Breast epithelium (tissue), 4 donors: ENCODE measurements at regions of chr11 and their contacts with region 1.

Region 1: DNA sequence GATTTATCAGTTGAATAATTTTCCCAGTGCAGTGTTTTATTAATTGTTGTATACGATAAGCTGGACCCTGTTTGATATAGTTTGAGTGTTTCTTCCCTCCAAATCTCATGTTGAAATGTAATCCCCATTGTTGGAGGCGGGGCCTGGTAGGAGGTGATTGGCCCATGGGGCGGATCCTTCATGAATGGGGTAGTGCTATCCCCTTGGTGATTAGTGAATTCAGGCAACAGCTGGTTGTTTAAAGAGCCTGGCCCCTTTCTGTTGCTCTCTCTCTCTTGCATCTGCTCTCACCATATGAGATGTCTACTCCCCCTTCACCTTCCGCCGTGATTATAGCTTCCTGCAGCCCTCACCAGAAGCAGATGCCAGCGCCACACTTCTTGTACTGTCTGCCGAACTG is 1.5 kb downstream of the OR5A1 start:
- DNase-seq: no peak
- H3K4me3 ChIP-seq: no peak overlapping the region
- H3K27ac ChIP-seq: no peak overlapping the region
- H3K4me1 ChIP-seq: no peaks in the 10 kb centered on the region
- H3K27me3 ChIP-seq: no peaks in the 10 kb centered on the region
- CTCF ChIP-seq: no peak
- POLR2A ChIP-seq: no peak

Region 2: GRCh38 chr11:57485217-57485990 is 1952.4 kb before region 1 on chr11:
- intact Hi-C with region 1: loop called (anchors 5 kb)
- DNase-seq: no peak
- H3K4me3 ChIP-seq: no peak overlapping the region
- H3K27ac ChIP-seq: no peak overlapping the region
- H3K4me1 ChIP-seq: peaks cover 0 to 6% of the 10 kb centered on the region in 2 donors
- H3K27me3 ChIP-seq: peaks cover 0 to 2% of the 10 kb centered on the region in 2 donors
- CTCF ChIP-seq: no peak
- POLR2A ChIP-seq: no peak

Region 3: DNA sequence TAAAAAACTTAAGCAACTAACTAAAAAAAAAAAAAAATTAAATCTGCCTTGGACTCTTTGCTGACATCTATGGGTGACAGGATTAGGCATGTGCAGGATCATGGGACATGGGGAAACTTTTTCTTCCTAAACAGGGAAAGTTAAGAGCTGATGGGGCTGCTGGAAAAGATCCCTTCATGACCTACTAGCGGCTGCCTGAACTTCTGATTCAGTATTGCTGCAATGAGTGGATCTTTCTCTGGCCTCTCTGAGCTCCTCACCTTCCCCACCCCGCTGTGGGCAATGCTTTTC is 36.6 kb before region 1 on chr11:
- intact Hi-C with region 1: no loop called
- DNase-seq: no peak
- H3K4me3 ChIP-seq: no peak overlapping the region
- H3K27ac ChIP-seq: no peak overlapping the region
- H3K4me1 ChIP-seq: no peaks in the 10 kb centered on the region
- H3K27me3 ChIP-seq: no peaks in the 10 kb centered on the region
- CTCF ChIP-seq: no peak
- POLR2A ChIP-seq: no peak

Region 4: GRCh38 chr11:60657888-60658287 is 1220.1 kb after region 1 on chr11:
- intact Hi-C with region 1: no loop called
- DNase-seq: no peak
- H3K4me3 ChIP-seq: no peak overlapping the region
- H3K27ac ChIP-seq: peak overlapping the region; percentile 29 to 52
- H3K4me1 ChIP-seq: no peaks in the 10 kb centered on the region
- H3K27me3 ChIP-seq: no peaks in the 10 kb centered on the region
- CTCF ChIP-seq: no peak
- POLR2A ChIP-seq: no peak